Right ventricle myocardium inferior (tissue), 1 donor: ENCODE measurements at regions of chr14 and their contacts with region 1.

Region 1: GRCh38 chr14:75709207-75709812 is 48.3 kb downstream of the TTLL5 start:
- DNase-seq: peak; percentile 69
- ATAC-seq: peak; percentile 73

Region 2: GRCh38 chr14:75794615-75795038 is 85.3 kb after region 1 on chr14:
- intact Hi-C with region 1: loop called (anchors 5 kb)
- DNase-seq: no peak
- ATAC-seq: peak; percentile 95

Region 3: GRCh38 chr14:75906676-75907280 is 197.5 kb after region 1 on chr14:
- intact Hi-C with region 1: loop called (anchors 1 kb)
- DNase-seq: no peak
- ATAC-seq: peak; percentile 55

Region 4: GRCh38 chr14:75982266-75983018 is 273.1 kb after region 1 on chr14:
- intact Hi-C with region 1: loop called (anchors 1 kb)
- DNase-seq: peak; percentile 88
- ATAC-seq: peak; percentile 69

Region 5: GRCh38 chr14:76386915-76387782 is 677.8 kb after region 1 on chr14:
- intact Hi-C with region 1: loop called (anchors 5 kb)
- DNase-seq: no peak
- ATAC-seq: peak; percentile 79